Vagina (tissue), 2 donors: ENCODE measurements at regions of chr4 and their contacts with region 1.

Region 1: GRCh38 chr4:79298484-79298883 is 27.4 kb downstream of the NAA11 start:
- DNase-seq: no peak
- H3K4me3 ChIP-seq: no peak overlapping the region
- H3K27ac ChIP-seq: no peak overlapping the region
- H3K4me1 ChIP-seq: no peaks in the 10 kb centered on the region
- H3K27me3 ChIP-seq: no peaks in the 10 kb centered on the region
- CTCF ChIP-seq: no peak
- POLR2A ChIP-seq: no peak

Region 2: GRCh38 chr4:79141530-79141929 is 157.0 kb before region 1 on chr4:
- intact Hi-C with region 1: no loop called
- DNase-seq: no peak
- H3K4me3 ChIP-seq: no peak overlapping the region
- H3K27ac ChIP-seq: no peak overlapping the region
- H3K4me1 ChIP-seq: no peaks in the 10 kb centered on the region
- H3K27me3 ChIP-seq: no peaks in the 10 kb centered on the region
- CTCF ChIP-seq: no peak
- POLR2A ChIP-seq: no peak

Region 3: GRCh38 chr4:79227860-79228259 is 70.6 kb before region 1 on chr4:
- intact Hi-C with region 1: loop called (anchors 2 kb)
- DNase-seq: no peak
- H3K4me3 ChIP-seq: no peak overlapping the region
- H3K27ac ChIP-seq: no peak overlapping the region
- H3K4me1 ChIP-seq: no peaks in the 10 kb centered on the region
- H3K27me3 ChIP-seq: no peaks in the 10 kb centered on the region
- CTCF ChIP-seq: no peak
- POLR2A ChIP-seq: no peak